ENCODE measurements at regions of chr9 and their contacts with region 1.

Region 1: GRCh38 chr9:83937911-83938323 is 16.7 kb upstream of the KIF27 start:
- DNase-seq: no peak
- ATAC-seq: peak; percentile 46 to 78 (median 72)
- H3K4me3 ChIP-seq: no peak overlapping the region
- H3K27ac ChIP-seq: no peak overlapping the region
- H3K4me1 ChIP-seq: peaks cover 28% of the 10 kb centered on the region
- H3K27me3 ChIP-seq: no peaks in the 10 kb centered on the region
- CTCF ChIP-seq: peak; percentile 72

Region 2: GRCh38 chr9:83986765-83987401 is 49.0 kb after region 1 on chr9:
- intact Hi-C with region 1: no loop called
- DNase-seq: peak; percentile 19 to 59
- ATAC-seq: peak; percentile 55 to 87 (median 68)
- H3K4me3 ChIP-seq: no peak overlapping the region
- H3K27ac ChIP-seq: no peak overlapping the region
- H3K4me1 ChIP-seq: peaks cover 2% of the 10 kb centered on the region
- H3K27me3 ChIP-seq: no peaks in the 10 kb centered on the region
- CTCF ChIP-seq: no peak

Region 3: GRCh38 chr9:84140535-84141101 is 202.7 kb after region 1 on chr9:
- intact Hi-C with region 1: no loop called
- DNase-seq: peak in 1 of 2 donors; percentile 54
- ATAC-seq: no peak
- H3K4me3 ChIP-seq: peak overlapping the region; percentile 56
- H3K27ac ChIP-seq: no peak overlapping the region
- H3K4me1 ChIP-seq: peaks cover 7% of the 10 kb centered on the region
- H3K27me3 ChIP-seq: peaks cover 0 to 37% (median 5%) of the 10 kb centered on the region in 3 donors
- CTCF ChIP-seq: no peak

Region 4: GRCh38 chr9:84261082-84261746 is 323.3 kb after region 1 on chr9:
- intact Hi-C with region 1: loop called (anchors 2 kb)
- DNase-seq: peak; percentile 81 to 91
- ATAC-seq: peak; percentile 97 to 100 (median 98)
- H3K4me3 ChIP-seq: peak overlapping the region; percentile 22
- H3K27ac ChIP-seq: no peak overlapping the region
- H3K4me1 ChIP-seq: no peaks in the 10 kb centered on the region
- H3K27me3 ChIP-seq: peaks cover 0 to 2% (median 0%) of the 10 kb centered on the region in 3 donors
- CTCF ChIP-seq: peak; percentile 97

Region 5: DNA sequence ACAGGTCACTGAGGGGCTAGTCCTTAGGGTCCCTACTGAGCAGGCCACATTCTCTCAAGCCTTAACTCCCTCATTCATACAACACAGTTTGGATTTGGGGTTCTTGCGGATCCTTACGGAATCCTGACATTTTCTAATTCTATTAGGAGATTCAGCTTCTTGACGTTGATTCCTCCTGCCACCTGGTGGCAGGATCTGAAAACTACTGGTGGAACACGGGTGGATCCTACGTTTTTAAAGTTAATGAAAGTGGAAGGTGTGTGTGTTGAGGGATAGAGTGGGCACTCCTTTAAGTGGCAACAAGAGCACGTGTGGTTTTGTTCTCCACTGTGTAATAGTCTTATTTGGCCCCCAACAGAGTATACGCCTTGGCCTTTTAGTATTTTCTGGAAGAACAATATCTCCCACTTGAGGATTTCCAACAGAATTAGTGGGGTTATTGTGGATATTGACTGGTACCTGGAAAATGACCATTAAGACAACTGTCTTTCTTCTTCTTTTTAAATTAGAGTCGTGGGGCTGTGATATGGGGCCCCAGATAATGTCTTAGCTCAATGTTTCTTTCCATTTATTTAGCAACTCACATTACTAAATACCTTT is 377.5 kb after region 1 on chr9:
- intact Hi-C with region 1: loop called (anchors 2 to 5 kb)
- DNase-seq: peak in 1 of 2 donors; percentile 37
- ATAC-seq: peak in 2 of 4 donors; percentile 36 to 67
- H3K4me3 ChIP-seq: no peak overlapping the region
- H3K27ac ChIP-seq: no peak overlapping the region
- H3K4me1 ChIP-seq: no peaks in the 10 kb centered on the region
- H3K27me3 ChIP-seq: peaks cover 0 to 2% (median 0%) of the 10 kb centered on the region in 3 donors
- CTCF ChIP-seq: peak; percentile 82